ENCODE measurements at regions of chr15 and their contacts with region 1.

Region 1: GRCh38 chr15:92903941-92904831 is 4.1 kb downstream of the CHD2 start:
- DNase-seq: peak; percentile 99
- H3K4me3 Mint-ChIP-seq: peak overlapping the region; percentile 92
- H3K27ac Mint-ChIP-seq: peak overlapping the region; percentile 100
- H3K4me1 Mint-ChIP-seq: peaks cover 50% of the 10 kb centered on the region
- H3K27me3 Mint-ChIP-seq: peaks cover 4% of the 10 kb centered on the region

Region 2: GRCh38 chr15:92820236-92821021 is 83.8 kb before region 1 on chr15:
- CTCF ChIA-PET with region 1: interaction called, 5 read pairs
- intact Hi-C with region 1: loop called (anchors 1 kb)
- DNase-seq: peak; percentile 91
- H3K4me3 Mint-ChIP-seq: peak overlapping the region; percentile 79
- H3K27ac Mint-ChIP-seq: peak overlapping the region; percentile 98
- H3K4me1 Mint-ChIP-seq: peaks cover 73% of the 10 kb centered on the region
- H3K27me3 Mint-ChIP-seq: no peaks in the 10 kb centered on the region

Region 3: GRCh38 chr15:92881802-92882696 is 22.1 kb before region 1 on chr15:
- CTCF ChIA-PET with region 1: interaction called, 48 read pairs
- intact Hi-C with region 1: loop called (anchors 1 kb)
- DNase-seq: peak; percentile 100
- H3K4me3 Mint-ChIP-seq: peak overlapping the region; percentile 95
- H3K27ac Mint-ChIP-seq: peak overlapping the region; percentile 98
- H3K4me1 Mint-ChIP-seq: peaks cover 51% of the 10 kb centered on the region
- H3K27me3 Mint-ChIP-seq: no peaks in the 10 kb centered on the region

Region 4: DNA sequence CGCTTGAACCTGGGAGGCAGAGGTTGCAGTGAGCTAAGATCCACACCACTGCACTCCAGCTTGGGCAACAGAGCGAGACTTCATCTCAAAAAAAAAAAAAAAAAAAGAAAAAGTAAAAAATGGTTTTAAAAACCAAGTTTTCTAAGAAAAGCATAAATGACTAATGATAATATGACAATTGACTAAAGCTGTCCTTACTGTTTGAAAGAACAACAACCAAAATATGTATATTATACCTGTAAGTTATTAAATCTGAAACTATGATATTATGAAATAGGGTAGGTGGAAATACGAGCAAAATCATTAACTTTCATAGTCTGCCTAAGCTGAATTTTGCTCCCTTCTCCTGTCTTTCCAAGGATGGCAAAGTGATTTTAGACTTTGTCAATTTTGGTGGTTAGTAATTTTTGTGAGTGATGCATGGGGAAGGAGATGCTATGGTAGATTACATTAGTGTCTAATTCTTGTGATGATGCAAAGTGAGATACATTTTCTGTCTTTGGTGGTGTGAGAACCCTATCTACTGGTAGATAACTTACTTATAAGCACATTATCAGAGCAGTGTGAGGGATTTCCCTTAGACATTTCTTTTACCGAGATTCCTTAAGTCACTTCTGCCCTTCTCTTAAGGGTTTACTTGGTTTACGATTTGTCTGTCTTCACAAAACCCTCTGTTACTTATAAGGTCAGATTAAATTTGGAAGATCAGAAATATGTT is 14.6 kb before region 1 on chr15:
- CTCF ChIA-PET with region 1: interaction called, 48 read pairs
- intact Hi-C with region 1: loop called (anchors 1 kb)
- DNase-seq: no peak
- H3K4me3 Mint-ChIP-seq: peak overlapping the region; percentile 65
- H3K27ac Mint-ChIP-seq: peak overlapping the region; percentile 92
- H3K4me1 Mint-ChIP-seq: peaks cover 65% of the 10 kb centered on the region
- H3K27me3 Mint-ChIP-seq: no peaks in the 10 kb centered on the region

Region 5: DNA sequence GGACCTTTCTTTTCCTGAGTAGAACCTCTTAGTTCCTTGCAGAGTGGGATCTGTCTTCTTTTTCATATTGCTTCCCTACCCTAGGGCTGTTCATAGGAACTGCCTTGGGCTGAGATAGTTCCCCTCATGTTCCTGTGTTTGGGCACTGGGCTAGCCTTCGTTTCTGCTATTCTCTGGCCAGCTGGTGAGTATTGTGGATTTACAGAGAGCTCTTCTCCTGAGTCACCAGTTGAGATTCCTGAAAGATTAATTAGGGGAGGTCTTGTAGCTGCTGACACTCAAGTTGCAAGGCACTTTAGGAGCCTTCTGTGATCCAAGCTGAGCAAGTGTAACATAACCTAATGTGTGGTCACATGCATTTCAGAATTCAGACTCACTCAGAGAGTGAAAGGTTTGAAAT is 26.6 kb after region 1 on chr15:
- CTCF ChIA-PET with region 1: no interaction called
- intact Hi-C with region 1: no loop called
- DNase-seq: no peak
- H3K4me3 Mint-ChIP-seq: no peak overlapping the region
- H3K27ac Mint-ChIP-seq: peak overlapping the region; percentile 62
- H3K4me1 Mint-ChIP-seq: peaks cover 53% of the 10 kb centered on the region
- H3K27me3 Mint-ChIP-seq: no peaks in the 10 kb centered on the region

Region 6: DNA sequence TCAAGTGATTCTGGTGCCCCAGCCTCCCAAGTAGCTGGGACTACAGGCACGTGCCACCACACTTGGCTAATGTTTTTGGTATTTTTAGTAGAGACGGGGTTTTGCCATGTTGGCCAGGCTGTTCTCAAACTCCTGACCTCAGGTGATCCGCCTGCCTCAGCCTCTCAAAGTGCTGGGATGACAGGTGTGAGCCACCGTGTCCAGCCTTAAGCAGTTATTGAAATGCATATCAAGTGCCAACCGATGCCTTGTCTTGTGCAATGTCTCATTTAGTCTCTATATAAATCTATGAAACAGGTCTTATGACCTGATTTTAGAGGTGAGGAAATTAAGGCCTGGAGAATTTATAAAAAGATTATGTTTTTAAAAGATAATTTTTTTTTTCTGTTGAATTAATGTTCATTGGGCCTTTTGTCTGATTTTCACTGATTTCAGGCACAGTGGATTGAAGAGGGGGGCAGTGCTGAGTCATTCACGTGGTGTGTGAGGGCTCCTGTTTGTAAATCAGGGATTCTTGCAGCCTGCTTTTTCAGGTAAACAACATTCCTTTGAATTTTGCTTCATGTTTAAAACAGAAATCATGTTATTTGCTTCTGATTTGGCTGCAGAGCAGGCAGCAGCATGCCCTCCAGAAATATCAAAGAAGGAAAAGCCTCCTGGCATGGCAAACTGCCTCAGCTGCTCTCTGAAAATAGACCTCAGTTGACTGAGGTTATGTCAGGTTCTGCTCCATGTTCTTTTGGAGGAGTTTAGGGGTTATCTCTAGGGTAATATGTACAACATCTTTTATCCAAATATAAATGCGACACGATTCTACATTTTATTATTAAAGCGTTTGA is 591.8 kb after region 1 on chr15:
- CTCF ChIA-PET with region 1: no interaction called
- intact Hi-C with region 1: no loop called
- DNase-seq: no peak
- H3K4me3 Mint-ChIP-seq: no peak overlapping the region
- H3K27ac Mint-ChIP-seq: no peak overlapping the region
- H3K4me1 Mint-ChIP-seq: no peaks in the 10 kb centered on the region
- H3K27me3 Mint-ChIP-seq: no peaks in the 10 kb centered on the region